Vagina (tissue), 2 donors: ENCODE measurements at regions of chr4 and their contacts with region 1.

Region 1: DNA sequence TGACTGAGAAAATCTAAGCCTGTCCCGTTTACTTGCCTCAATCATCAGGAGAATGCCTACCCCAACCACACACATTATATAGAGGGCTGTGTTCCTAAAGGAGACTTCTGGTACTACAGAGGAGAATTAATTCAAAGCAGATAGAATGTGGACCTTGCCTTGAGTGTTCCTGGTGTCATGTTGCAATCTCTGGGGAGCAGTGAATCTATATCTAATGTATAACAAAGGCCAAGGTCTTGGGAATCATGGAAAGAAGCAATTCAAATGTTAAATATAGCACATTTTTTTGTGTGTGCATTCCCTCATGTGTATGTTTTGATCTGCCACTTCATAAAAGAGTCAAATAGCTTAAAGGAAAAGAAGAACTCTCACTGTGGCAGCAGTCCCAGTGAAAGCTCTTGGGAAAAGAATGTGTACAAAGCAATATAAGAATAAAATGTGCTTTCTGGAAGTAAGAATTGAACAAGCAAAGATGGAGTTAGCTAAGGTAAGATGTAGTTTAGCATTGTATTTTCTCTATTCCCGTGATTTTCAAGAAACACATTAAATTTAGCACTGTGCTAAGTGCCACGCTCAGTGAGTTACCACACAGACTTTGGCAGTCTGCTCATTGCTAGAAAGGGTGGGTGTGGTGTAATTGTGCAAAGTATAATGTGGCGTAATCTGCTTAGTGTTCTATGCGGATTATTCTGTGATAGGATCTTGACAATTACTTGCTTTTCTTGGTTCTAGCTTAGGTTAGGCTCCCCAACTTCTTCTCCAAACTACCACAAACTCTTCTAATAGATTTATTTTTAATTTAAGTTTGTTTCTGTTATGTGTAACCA is 13.7 kb downstream of the ADH6 start:
- DNase-seq: no peak
- H3K4me3 ChIP-seq: no peak overlapping the region
- H3K27ac ChIP-seq: peak overlapping the region; percentile 28
- H3K4me1 ChIP-seq: peaks cover 19% of the 10 kb centered on the region
- H3K27me3 ChIP-seq: no peaks in the 10 kb centered on the region
- CTCF ChIP-seq: no peak
- POLR2A ChIP-seq: no peak

Region 2: DNA sequence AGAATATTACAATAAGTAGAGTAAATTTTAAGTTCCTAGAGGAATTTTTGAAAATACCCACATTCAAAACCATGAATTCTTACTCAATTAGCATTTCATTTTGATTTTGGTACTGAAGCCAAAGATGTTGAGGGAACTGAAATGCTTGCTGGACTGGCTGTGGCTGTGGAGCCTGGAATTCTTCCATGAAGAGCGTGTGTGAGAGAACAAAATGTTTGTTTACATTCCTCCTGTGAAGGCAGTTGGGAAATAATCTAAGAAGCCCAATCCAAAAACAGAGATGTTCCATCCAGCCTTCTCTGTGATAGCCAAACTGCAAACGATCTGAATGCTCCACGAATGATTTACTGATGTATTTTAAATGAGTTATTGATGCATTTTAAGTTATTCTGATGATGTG is 119.6 kb after region 1 on chr4:
- intact Hi-C with region 1: loop called (anchors 10 kb)
- DNase-seq: no peak
- H3K4me3 ChIP-seq: no peak overlapping the region
- H3K27ac ChIP-seq: peak overlapping the region; percentile 84
- H3K4me1 ChIP-seq: peaks cover 43% of the 10 kb centered on the region
- H3K27me3 ChIP-seq: no peaks in the 10 kb centered on the region
- CTCF ChIP-seq: no peak
- POLR2A ChIP-seq: no peak